Endothelial cell of umbilical vein (primary cell): ENCODE measurements at regions of chr17 and their contacts with region 1.

Region 1: DNA sequence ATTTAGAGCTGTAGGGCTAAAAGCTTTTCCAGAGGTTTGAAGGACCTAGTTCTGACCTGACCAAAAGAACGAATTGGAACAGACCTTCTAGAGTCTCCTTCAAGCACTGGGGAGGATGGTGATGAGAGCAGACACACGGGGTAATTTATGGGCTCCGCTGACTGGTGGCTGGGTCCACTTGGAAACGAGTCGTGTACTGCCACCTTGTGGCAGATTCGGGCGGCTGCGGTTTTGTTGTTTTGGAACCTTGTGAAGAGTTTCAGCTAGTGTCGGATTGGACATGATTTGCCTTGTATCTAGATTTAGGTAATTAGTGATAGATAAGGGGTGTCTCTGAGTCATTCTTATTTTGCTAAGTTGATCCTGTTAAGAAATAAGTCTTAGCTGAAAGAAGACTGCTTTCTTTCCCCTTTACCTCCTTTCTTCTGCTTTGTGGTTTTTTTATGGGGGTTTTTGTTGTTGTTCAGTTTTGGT is 98.9 kb downstream of the AATF start:
- DNase-seq: peak; percentile 78
- H3K4me3 ChIP-seq: no peak overlapping the region
- H3K27ac ChIP-seq: no peak overlapping the region
- H3K4me1 ChIP-seq: peaks cover 3% of the 10 kb centered on the region
- H3K27me3 ChIP-seq: no peaks in the 10 kb centered on the region
- CTCF ChIP-seq: peak; percentile 89
- POLR2A ChIP-seq: no peak

Region 2: DNA sequence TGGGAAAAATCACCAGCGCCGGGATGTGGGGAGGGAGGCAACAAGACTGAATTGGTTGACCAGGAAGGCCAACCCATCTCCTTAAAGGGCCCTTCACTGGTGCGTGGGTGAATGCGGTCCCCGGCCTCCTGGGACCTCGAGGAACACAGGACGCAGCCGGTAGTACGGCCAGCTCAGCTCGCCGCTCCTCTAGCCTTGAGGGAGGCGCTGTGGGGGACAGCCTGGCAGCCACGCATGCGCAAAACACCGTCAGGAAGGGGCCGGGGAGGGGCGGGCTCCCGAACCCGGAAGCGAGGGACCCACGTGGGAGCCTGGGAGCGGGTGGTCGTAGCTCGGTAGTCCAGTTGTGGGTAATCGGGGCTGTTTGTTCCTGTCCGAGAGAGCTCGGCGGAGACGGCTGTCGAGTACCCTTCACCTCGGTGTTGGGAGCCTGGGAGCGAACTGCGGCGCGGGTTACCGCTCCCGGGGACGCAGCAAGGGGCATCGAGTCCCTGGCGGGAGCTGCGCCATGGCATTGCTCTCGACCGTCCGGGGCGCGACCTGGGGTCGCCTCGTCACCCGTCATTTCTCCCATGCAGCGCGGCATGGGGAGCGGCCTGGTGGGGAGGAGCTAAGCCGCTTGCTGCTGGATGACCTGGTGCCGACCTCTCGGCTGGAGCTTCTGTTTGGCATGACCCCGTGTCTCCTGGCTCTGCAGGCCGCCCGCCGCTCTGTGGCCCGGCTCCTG is 446.2 kb before region 1 on chr17 and contains the start of gene MRM1:
- CTCF ChIA-PET with region 1: interaction called, 48 read pairs
- POLR2A ChIA-PET with region 1: no interaction called
- dilution Hi-C with region 1: no loop called
- intact Hi-C with region 1: loop called (anchors 1 kb)
- DNase-seq: peak; percentile 93
- H3K4me3 ChIP-seq: peak within 1 kb of the TSS; percentile 34 to 67 (median 63)
- H3K27ac ChIP-seq: peak within 1 kb of the TSS; percentile 54
- H3K4me1 ChIP-seq: peaks cover 16% of the 10 kb centered on the region
- H3K27me3 ChIP-seq: no peaks in the 10 kb centered on the region
- CTCF ChIP-seq: peak in 1 of 2 donors; percentile 27
- POLR2A ChIP-seq: peak; percentile 98
- total RNA-seq, gene MRM1: 5.2 and 5.9 TPM in 2 replicates

Region 3: GRCh38 chr17:36641877-36642845 is 405.5 kb before region 1 on chr17:
- CTCF ChIA-PET with region 1: interaction called, 11 read pairs
- POLR2A ChIA-PET with region 1: no interaction called
- dilution Hi-C with region 1: no loop called
- intact Hi-C with region 1: no loop called
- DNase-seq: no peak
- H3K4me3 ChIP-seq: peak overlapping the region in 1 of 3 experiments; percentile 21
- H3K27ac ChIP-seq: no peak overlapping the region
- H3K4me1 ChIP-seq: no peaks in the 10 kb centered on the region
- H3K27me3 ChIP-seq: peaks cover 54 to 57% of the 10 kb centered on the region in 2 experiments
- CTCF ChIP-seq: no peak
- POLR2A ChIP-seq: no peak

Region 4: GRCh38 chr17:36768394-36768793 is 279.3 kb before region 1 on chr17:
- CTCF ChIA-PET with region 1: interaction called, 20 read pairs
- POLR2A ChIA-PET with region 1: no interaction called
- dilution Hi-C with region 1: no loop called
- intact Hi-C with region 1: loop called (anchors 5 kb)
- DNase-seq: no peak
- H3K4me3 ChIP-seq: no peak overlapping the region
- H3K27ac ChIP-seq: no peak overlapping the region
- H3K4me1 ChIP-seq: no peaks in the 10 kb centered on the region
- H3K27me3 ChIP-seq: peaks cover 17 to 19% of the 10 kb centered on the region in 2 experiments
- CTCF ChIP-seq: peak; percentile 7 to 15
- POLR2A ChIP-seq: no peak

Region 5: GRCh38 chr17:36948717-36949460 is 98.8 kb before region 1 on chr17 and contains the start of gene AATF:
- CTCF ChIA-PET with region 1: interaction called, 21 read pairs
- POLR2A ChIA-PET with region 1: no interaction called
- dilution Hi-C with region 1: no loop called
- intact Hi-C with region 1: loop called (anchors 2 kb)
- DNase-seq: peak; percentile 97
- H3K4me3 ChIP-seq: peak within 1 kb of the TSS; percentile 43 to 83 (median 69)
- H3K27ac ChIP-seq: peak within 1 kb of the TSS; percentile 27
- H3K4me1 ChIP-seq: peaks cover 14% of the 10 kb centered on the region
- H3K27me3 ChIP-seq: peaks cover 36 to 44% of the 10 kb centered on the region in 2 experiments
- CTCF ChIP-seq: no peak
- POLR2A ChIP-seq: peak; percentile 56
- total RNA-seq, gene AATF: 44.8 and 47.2 TPM in 2 replicates

Region 6: DNA sequence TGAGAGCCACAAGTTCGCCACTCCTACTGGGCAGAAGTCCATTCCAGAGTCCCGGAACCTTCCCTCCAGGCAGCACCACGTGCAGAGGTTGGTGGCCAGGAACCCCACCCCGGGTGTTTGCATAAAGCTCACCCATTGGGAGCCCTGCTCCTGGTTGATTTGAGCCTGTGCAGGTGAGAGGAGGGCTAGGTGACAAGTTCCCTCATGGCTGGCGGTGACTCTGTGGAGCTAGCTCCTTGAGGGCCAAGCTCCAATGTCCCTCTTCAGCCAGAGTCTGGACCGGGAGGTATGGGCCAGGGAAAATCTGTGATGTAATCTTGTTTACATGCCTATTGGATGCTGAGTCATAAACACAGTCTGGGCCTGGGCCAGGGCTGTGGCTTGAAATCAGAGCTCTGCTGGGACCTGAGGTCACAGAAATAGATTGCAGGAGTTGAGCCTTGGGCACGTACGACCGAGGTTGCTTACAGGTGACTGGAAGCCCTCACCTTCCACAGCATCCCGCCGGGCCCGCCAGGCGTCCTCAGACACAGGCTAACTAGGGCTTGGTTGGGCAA is 20.0 kb after region 1 on chr17:
- CTCF ChIA-PET with region 1: interaction called, 10 read pairs
- POLR2A ChIA-PET with region 1: no interaction called
- dilution Hi-C with region 1: no loop called
- intact Hi-C with region 1: no loop called
- DNase-seq: peak; percentile 72
- H3K4me3 ChIP-seq: no peak overlapping the region
- H3K27ac ChIP-seq: no peak overlapping the region
- H3K4me1 ChIP-seq: peaks cover 3% of the 10 kb centered on the region
- H3K27me3 ChIP-seq: peaks cover 16 to 26% of the 10 kb centered on the region in 2 experiments
- CTCF ChIP-seq: no peak
- POLR2A ChIP-seq: no peak

Region 7: GRCh38 chr17:37283414-37283961 is 235.8 kb after region 1 on chr17:
- CTCF ChIA-PET with region 1: no interaction called
- POLR2A ChIA-PET with region 1: no interaction called
- dilution Hi-C with region 1: no loop called
- intact Hi-C with region 1: no loop called
- DNase-seq: no peak
- H3K4me3 ChIP-seq: no peak overlapping the region
- H3K27ac ChIP-seq: no peak overlapping the region
- H3K4me1 ChIP-seq: peaks cover 8% of the 10 kb centered on the region
- H3K27me3 ChIP-seq: no peaks in the 10 kb centered on the region
- CTCF ChIP-seq: no peak
- POLR2A ChIP-seq: no peak